ENCODE measurements at regions of chr1 and their contacts with region 1.

Region 1: GRCh38 chr1:235328357-235329138 is at the start of gene GGPS1:
- DNase-seq: peak; percentile 100
- H3K4me3 Mint-ChIP-seq: no peak within 1 kb of the TSS
- H3K27ac Mint-ChIP-seq: no peak within 1 kb of the TSS
- H3K4me1 Mint-ChIP-seq: peaks cover 42% of the 10 kb centered on the region
- H3K27me3 Mint-ChIP-seq: no peaks in the 10 kb centered on the region
- total RNA-seq, gene GGPS1: 36.1 to 37.5 TPM

Region 2: DNA sequence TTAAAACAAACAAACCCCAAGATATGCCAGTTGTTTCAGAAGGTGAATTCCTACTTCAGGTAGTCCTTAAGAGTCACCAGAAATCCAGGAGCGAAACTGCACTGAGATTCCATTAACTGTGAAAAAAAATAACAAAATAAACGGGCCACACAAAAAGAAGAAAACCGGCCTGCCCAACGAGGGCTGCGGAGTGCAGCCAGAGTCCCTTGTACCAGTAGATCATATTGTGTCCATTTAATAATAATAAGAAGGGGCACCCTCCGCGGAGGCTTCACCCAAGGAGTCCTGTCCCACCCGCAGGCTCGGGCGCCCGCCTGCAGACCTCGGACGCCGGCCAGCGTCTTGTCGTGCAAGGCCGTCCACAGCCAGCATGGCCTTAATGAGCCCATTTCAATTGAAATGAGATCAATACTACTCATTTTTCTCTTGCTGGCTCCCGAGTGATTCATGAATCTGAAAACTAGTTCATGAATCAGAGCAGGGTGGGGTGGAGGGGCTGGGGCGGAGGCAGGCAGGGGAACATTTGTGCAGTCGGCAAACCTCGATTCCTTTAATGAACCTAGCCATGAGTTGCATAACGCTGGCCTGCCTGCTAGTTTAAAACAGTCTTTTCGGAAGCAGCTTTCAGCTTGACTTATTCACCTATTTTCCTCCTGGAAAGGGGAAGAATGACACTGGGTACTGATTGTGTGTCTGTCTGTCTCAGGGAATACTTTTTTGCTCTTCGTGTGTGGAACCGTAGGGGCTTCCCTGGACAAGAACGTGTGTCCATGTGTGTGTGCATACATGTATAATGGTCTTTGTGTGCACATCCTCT is 605.4 kb before region 1 on chr1:
- CTCF ChIA-PET with region 1: no interaction called
- POLR2A ChIA-PET with region 1: no interaction called
- intact Hi-C with region 1: loop called (anchors 1 kb)
- DNase-seq: peak; percentile 91
- H3K4me3 Mint-ChIP-seq: peak overlapping the region; percentile 60
- H3K27ac Mint-ChIP-seq: peak overlapping the region; percentile 96
- H3K4me1 Mint-ChIP-seq: peaks cover 66% of the 10 kb centered on the region
- H3K27me3 Mint-ChIP-seq: no peaks in the 10 kb centered on the region

Region 3: GRCh38 chr1:235128456-235129328 is 199.9 kb before region 1 on chr1 and contains the start of gene TOMM20:
- CTCF ChIA-PET with region 1: no interaction called
- POLR2A ChIA-PET with region 1: no interaction called
- intact Hi-C with region 1: loop called (anchors 1 kb)
- DNase-seq: peak; percentile 98
- H3K4me3 Mint-ChIP-seq: peak within 1 kb of the TSS; percentile 86
- H3K27ac Mint-ChIP-seq: peak within 1 kb of the TSS; percentile 94
- H3K4me1 Mint-ChIP-seq: peaks cover 41% of the 10 kb centered on the region
- H3K27me3 Mint-ChIP-seq: no peaks in the 10 kb centered on the region
- total RNA-seq, gene TOMM20: 127 to 142 TPM

Region 4: DNA sequence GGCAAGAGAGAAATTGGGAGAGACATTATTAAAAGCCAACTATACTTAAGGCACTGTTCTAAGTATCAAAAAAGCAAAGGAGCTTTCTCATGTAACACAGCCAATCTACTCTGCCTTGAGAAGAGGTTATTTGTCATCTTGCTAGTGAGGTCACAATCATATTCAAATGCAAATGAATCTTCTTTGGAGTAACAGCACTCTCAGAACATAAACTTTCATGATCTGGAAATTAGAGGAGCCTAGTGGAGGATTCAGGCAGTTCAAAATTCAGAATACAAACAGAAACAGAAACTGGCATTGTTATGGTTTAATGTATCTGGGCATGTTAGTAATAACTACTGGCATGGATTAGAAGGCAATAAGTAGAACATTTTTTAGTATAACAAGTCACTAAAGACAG is 57.9 kb before region 1 on chr1:
- CTCF ChIA-PET with region 1: no interaction called
- POLR2A ChIA-PET with region 1: interaction called, 3 read pairs
- intact Hi-C with region 1: loop called (anchors 1 kb)
- DNase-seq: no peak
- H3K4me3 Mint-ChIP-seq: no peak overlapping the region
- H3K27ac Mint-ChIP-seq: peak overlapping the region; percentile 70
- H3K4me1 Mint-ChIP-seq: peaks cover 68% of the 10 kb centered on the region
- H3K27me3 Mint-ChIP-seq: no peaks in the 10 kb centered on the region

Region 5: GRCh38 chr1:235367000-235367908 is 38.7 kb after region 1 on chr1 and contains the start of gene TBCE:
- CTCF ChIA-PET with region 1: no interaction called
- POLR2A ChIA-PET with region 1: interaction called, 4 read pairs
- intact Hi-C with region 1: loop called (anchors 1 kb)
- DNase-seq: peak; percentile 95
- H3K4me3 Mint-ChIP-seq: peak within 1 kb of the TSS; percentile 97
- H3K27ac Mint-ChIP-seq: peak within 1 kb of the TSS; percentile 76
- H3K4me1 Mint-ChIP-seq: peaks cover 28% of the 10 kb centered on the region
- H3K27me3 Mint-ChIP-seq: no peaks in the 10 kb centered on the region
- total RNA-seq, gene TBCE: 22.7 to 26.3 TPM